Activated CD4-positive, alpha-beta T cell treated with anti-CD3 and anti-CD28 coated beads for 36 hours (primary cell): ENCODE measurements at regions of chr9 and their contacts with region 1.

Region 1: DNA sequence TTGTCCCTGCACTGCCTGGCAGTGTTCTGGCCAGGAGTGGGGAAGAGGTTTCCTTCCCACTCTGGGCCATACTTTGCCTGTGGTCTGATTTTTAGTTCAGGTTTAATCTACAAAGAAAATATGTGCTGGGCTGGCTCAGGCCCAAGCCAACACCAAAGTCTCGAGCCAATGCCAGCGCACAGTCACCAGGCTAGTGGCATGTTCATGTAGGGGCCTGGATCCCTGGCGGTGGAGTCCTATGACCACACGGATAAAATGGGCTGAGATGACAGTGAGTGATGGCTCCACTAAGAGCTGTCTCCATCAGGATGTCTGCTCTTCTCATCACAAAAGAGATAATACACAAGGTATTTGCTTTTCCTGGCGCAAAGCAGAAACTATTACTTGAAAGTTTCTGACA is 92.8 kb upstream of the PTPN3 start:
- DNase-seq: no peak
- ATAC-seq: no peak
- H3K4me3 Mint-ChIP-seq: no peak overlapping the region
- H3K27ac Mint-ChIP-seq: no peak overlapping the region
- H3K4me1 Mint-ChIP-seq: no peaks in the 10 kb centered on the region
- H3K27me3 Mint-ChIP-seq: peaks cover 10% of the 10 kb centered on the region

Region 2: DNA sequence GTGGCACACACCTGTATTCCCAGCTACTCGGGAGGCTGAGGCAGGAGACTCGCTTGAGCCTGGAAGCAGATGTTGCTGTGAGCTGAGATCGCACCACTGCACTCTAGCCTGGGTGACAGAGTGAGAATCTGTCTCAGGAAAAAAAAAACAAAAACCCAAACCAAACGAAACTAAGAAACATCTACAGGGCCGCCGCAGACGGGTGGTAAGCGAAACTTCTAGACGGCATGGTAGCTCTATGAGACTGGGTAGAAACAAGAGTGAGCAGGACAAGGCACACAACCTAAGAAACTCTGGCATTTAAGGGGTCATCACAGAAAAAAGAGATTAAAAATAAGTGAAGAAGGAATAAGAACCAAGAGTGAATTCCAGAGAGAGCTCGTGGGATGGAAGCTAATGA is 1646.6 kb before region 1 on chr9:
- CTCF ChIA-PET with region 1: no interaction called
- POLR2A ChIA-PET with region 1: interaction called, 11 read pairs
- intact Hi-C with region 1: no loop called
- DNase-seq: no peak
- ATAC-seq: no peak
- H3K4me3 Mint-ChIP-seq: no peak overlapping the region
- H3K27ac Mint-ChIP-seq: no peak overlapping the region
- H3K4me1 Mint-ChIP-seq: no peaks in the 10 kb centered on the region
- H3K27me3 Mint-ChIP-seq: peaks cover 7% of the 10 kb centered on the region